Astrocyte of the cerebellum (primary cell): ENCODE measurements at regions of chr5 and their contacts with region 1.

Region 1: GRCh38 chr5:159444441-159445082 is 114.3 kb upstream of the IL12B start:
- DNase-seq: peak; percentile 68
- H3K4me3 ChIP-seq: no peak overlapping the region
- CTCF ChIP-seq: peak; percentile 47

Region 2: GRCh38 chr5:159915904-159916840 is 471.6 kb after region 1 on chr5 and contains the start of gene ADRA1B:
- in situ Hi-C with region 1: loop called (anchors 25 kb)
- DNase-seq: no peak
- H3K4me3 ChIP-seq: peak within 1 kb of the TSS; percentile 42
- CTCF ChIP-seq: peak; percentile 44

Region 3: GRCh38 chr5:159987031-159987674 is 542.6 kb after region 1 on chr5:
- in situ Hi-C with region 1: loop called (anchors 25 kb)
- DNase-seq: no peak
- H3K4me3 ChIP-seq: peak overlapping the region; percentile 42
- CTCF ChIP-seq: peak; percentile 80